Head of caudate nucleus (tissue), 42 donors: ENCODE measurements at regions of chr3 and their contacts with region 1.

Region 1: DNA sequence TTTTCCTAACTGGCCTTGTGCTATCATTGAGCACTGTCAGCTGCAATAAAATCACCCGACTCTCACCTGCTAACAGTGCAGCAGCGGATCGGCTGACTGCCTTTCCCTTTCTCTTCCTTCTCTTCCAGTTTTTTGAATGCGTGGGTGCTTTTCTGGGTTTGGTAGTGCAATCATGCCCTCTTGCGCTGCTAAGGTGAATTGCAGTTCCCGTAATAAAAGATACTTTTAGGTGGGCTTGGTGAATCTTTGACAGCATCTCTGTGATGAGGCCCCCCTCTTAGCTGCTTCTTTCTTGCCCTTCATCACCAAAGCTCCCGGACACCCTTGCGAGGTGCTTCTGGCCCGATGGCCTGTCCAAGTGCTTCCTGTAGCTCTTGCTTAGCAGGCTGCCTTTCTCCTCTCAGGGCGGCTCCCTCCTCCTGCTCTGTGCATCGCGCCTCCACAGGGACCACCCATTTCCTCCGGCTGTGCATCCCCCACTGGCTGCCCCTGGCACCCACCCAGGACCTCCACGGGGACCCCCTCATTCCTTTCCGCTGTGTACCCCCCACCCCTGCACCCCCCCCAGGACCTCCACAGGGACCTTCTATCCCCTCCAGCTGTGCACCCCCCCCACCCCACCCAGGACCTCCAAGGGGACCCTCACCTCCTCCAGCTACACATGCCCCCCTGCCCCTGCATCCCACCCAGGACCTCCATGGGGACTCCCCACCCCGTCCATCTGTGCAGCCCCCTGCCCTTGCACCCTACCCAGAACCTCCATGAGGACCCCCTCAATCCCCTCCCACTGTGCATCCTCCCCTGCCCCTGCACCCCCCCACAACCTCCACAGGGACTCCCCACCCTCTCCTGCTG is 50.8 kb upstream of the RPL32 start:
- DNase-seq: peak in 41 of 42 donors; percentile 39 to 86 (median 66)

Region 2: GRCh38 chr3:12967606-12968351 is 75.6 kb after region 1 on chr3:
- intact Hi-C with region 1: loop called (anchors 5 kb)
- DNase-seq: peak in 41 of 42 donors; percentile 73 to 95 (median 89)